T-cell (primary cell): ENCODE measurements at regions of chr3 and their contacts with region 1.

Region 1: GRCh38 chr3:172710664-172711453 is at the start of gene NCEH1:
- DNase-seq: peak; percentile 23 to 81 (median 53)
- ATAC-seq: peak; percentile 93 to 97 (median 96)
- H3K4me3 ChIP-seq: peak within 1 kb of the TSS; percentile 92 to 95
- H3K4me3 Mint-ChIP-seq: peak within 1 kb of the TSS; percentile 95 to 97 (median 96)
- H3K27ac ChIP-seq: peak within 1 kb of the TSS; percentile 34
- H3K27ac Mint-ChIP-seq: peak within 1 kb of the TSS; percentile 47 to 83
- H3K4me1 ChIP-seq: peaks cover 4 to 14% of the 10 kb centered on the region in 2 experiments
- H3K4me1 Mint-ChIP-seq: peaks cover 25 to 30% (median 28%) of the 10 kb centered on the region in 3 donors
- H3K27me3 ChIP-seq: peaks cover 0 to 4% of the 10 kb centered on the region in 2 experiments
- H3K27me3 Mint-ChIP-seq: no peaks in the 10 kb centered on the region
- total RNA-seq, gene NCEH1: 2.4 to 3.8 (median 3.5) TPM

Region 2: GRCh38 chr3:171691479-171691878 is 1019.4 kb before region 1 on chr3:
- CTCF ChIA-PET with region 1: interaction called in 1 of 2 experiments, 13 read pairs
- POLR2A ChIA-PET with region 1: no interaction called
- DNase-seq: no peak
- ATAC-seq: no peak
- H3K4me3 ChIP-seq: no peak overlapping the region
- H3K4me3 Mint-ChIP-seq: no peak overlapping the region
- H3K27ac ChIP-seq: no peak overlapping the region
- H3K27ac Mint-ChIP-seq: no peak overlapping the region
- H3K4me1 ChIP-seq: no peaks in the 10 kb centered on the region
- H3K4me1 Mint-ChIP-seq: peaks cover 0 to 7% (median 4%) of the 10 kb centered on the region in 3 donors
- H3K27me3 ChIP-seq: no peaks in the 10 kb centered on the region
- H3K27me3 Mint-ChIP-seq: peaks cover 2 to 14% of the 10 kb centered on the region in 2 donors

Region 3: DNA sequence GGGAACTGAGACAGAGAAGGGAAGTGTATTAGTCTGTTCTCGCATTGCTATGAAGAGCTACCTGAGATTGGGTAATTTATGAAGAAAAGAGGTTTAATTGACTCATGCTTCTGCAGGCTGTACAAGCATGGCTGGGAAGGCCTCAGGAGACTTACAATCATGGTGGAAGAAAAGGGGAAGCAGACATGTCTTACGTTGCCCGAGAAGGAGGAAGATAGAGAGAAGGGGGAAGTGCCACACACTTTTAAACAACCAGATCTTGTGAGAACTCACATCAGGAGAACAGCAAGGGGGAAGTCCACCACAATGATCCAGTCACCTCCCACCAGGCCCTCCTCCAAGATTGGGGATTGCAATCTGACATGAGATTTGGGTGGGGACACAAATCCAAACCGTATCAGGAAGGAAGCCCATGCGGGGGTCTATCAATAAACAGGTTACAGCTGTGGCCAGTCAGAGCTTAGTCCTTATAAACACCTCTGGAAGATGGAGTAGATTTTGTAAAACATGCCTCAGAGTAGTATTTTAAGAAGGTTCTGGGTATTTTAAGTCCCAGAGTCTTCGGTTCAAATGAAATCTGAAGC is 416.5 kb before region 1 on chr3:
- CTCF ChIA-PET with region 1: no interaction called
- POLR2A ChIA-PET with region 1: no interaction called
- DNase-seq: no peak
- ATAC-seq: no peak
- H3K4me3 ChIP-seq: no peak overlapping the region
- H3K4me3 Mint-ChIP-seq: no peak overlapping the region
- H3K27ac ChIP-seq: no peak overlapping the region
- H3K27ac Mint-ChIP-seq: no peak overlapping the region
- H3K4me1 ChIP-seq: no peaks in the 10 kb centered on the region
- H3K4me1 Mint-ChIP-seq: peaks cover 5% of the 10 kb centered on the region in 3 donors
- H3K27me3 ChIP-seq: no peaks in the 10 kb centered on the region
- H3K27me3 Mint-ChIP-seq: no peaks in the 10 kb centered on the region

Region 4: GRCh38 chr3:172735014-172735413 is 24.2 kb after region 1 on chr3:
- CTCF ChIA-PET with region 1: no interaction called
- POLR2A ChIA-PET with region 1: no interaction called
- DNase-seq: no peak
- ATAC-seq: no peak
- H3K4me3 ChIP-seq: no peak overlapping the region
- H3K4me3 Mint-ChIP-seq: no peak overlapping the region
- H3K27ac ChIP-seq: no peak overlapping the region
- H3K27ac Mint-ChIP-seq: no peak overlapping the region
- H3K4me1 ChIP-seq: no peaks in the 10 kb centered on the region
- H3K4me1 Mint-ChIP-seq: no peaks in the 10 kb centered on the region
- H3K27me3 ChIP-seq: peaks cover 0 to 10% of the 10 kb centered on the region in 2 experiments
- H3K27me3 Mint-ChIP-seq: peaks cover 0 to 8% of the 10 kb centered on the region in 2 donors

Region 5: DNA sequence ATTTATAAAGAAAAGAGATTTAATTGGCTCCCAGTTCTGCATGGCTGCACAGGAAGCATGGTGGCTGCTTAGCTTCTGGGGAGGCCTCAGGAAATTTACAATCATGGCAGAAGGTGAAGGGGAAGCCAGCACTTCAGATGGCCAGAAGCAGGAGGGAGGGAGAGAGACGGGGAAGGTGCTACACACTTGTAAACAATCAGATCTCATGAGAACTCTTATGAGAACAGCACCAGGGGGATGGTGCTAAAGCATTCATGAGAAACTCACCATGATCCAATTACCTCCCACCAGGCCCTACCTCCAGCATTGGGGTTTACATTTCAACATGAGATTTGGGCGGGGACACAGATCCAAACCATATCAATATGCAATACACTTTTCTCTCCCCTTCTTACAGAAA is 113.4 kb after region 1 on chr3:
- CTCF ChIA-PET with region 1: interaction called in 1 of 2 experiments, 12 read pairs
- POLR2A ChIA-PET with region 1: no interaction called
- DNase-seq: no peak
- ATAC-seq: no peak
- H3K4me3 ChIP-seq: no peak overlapping the region
- H3K4me3 Mint-ChIP-seq: no peak overlapping the region
- H3K27ac ChIP-seq: no peak overlapping the region
- H3K27ac Mint-ChIP-seq: no peak overlapping the region
- H3K4me1 ChIP-seq: no peaks in the 10 kb centered on the region
- H3K4me1 Mint-ChIP-seq: no peaks in the 10 kb centered on the region
- H3K27me3 ChIP-seq: no peaks in the 10 kb centered on the region
- H3K27me3 Mint-ChIP-seq: no peaks in the 10 kb centered on the region